ENCODE measurements at regions of chr5 and their contacts with region 1.

Region 1: GRCh38 chr5:56415356-56415765 is 182.2 kb upstream of the ANKRD55 start:
- DNase-seq: peak; percentile 89
- ATAC-seq: peak; percentile 71
- H3K4me3 ChIP-seq: peak overlapping the region in 3 of 5 experiments; percentile 21 to 56 (median 21)
- H3K4me3 Mint-ChIP-seq: peak overlapping the region; percentile 76
- H3K27ac ChIP-seq: peak overlapping the region; percentile 95 to 98
- H3K27ac Mint-ChIP-seq: peak overlapping the region; percentile 96
- H3K4me1 ChIP-seq: peaks cover 73 to 74% of the 10 kb centered on the region in 2 donors
- H3K4me1 Mint-ChIP-seq: peaks cover 80% of the 10 kb centered on the region
- H3K27me3 ChIP-seq: no peaks in the 10 kb centered on the region
- H3K27me3 Mint-ChIP-seq: no peaks in the 10 kb centered on the region
- CTCF ChIP-seq: no peak

Region 2: GRCh38 chr5:55391707-55392106 is 1023.7 kb before region 1 on chr5:
- CTCF ChIA-PET with region 1: no interaction called
- POLR2A ChIA-PET with region 1: no interaction called
- intact Hi-C with region 1: no loop called
- DNase-seq: no peak
- ATAC-seq: no peak
- H3K4me3 ChIP-seq: no peak overlapping the region
- H3K4me3 Mint-ChIP-seq: no peak overlapping the region
- H3K27ac ChIP-seq: no peak overlapping the region
- H3K27ac Mint-ChIP-seq: no peak overlapping the region
- H3K4me1 ChIP-seq: no peaks in the 10 kb centered on the region
- H3K4me1 Mint-ChIP-seq: no peaks in the 10 kb centered on the region
- H3K27me3 ChIP-seq: no peaks in the 10 kb centered on the region
- H3K27me3 Mint-ChIP-seq: no peaks in the 10 kb centered on the region
- CTCF ChIP-seq: no peak

Region 3: DNA sequence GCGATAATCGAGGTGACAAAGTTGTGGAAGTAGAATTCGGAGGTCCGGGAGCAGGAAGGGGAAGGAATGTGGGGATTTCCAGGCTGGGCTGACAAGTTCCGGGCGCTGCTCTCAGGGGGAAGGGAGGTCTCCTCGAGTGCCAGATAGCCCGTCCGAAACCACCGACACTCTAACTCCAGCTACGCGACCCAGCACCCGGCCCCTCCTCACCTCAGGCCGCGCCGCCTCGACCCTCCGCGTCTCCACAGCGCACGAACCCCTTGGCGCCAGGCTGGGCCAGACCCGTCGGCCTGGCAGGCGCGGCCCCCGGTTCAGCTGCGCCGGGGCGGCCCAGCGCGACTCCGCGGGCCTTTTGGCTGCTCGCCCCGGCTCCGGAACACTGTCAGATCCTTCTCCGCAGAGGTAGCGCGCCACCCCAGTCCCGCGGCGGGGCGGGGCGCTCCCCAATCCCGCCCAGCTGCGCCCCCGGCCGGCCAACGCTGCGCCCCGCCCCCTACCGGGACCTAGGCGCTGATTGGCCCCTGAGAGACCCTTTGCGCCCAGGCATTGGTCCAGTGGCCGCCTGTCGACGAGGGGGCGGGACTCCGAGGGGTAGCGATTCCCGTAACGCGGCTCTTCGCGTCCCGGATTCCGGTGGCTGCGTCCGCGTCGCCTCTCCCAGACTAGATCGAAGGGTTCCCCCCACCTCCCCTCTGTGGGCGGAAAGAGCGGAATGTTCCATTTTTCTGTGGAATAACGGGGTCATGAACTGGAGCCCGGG is 420.6 kb before region 1 on chr5 and contains the start of gene IL6ST:
- CTCF ChIA-PET with region 1: no interaction called
- POLR2A ChIA-PET with region 1: no interaction called
- intact Hi-C with region 1: loop called (anchors 1 kb)
- DNase-seq: peak; percentile 96
- ATAC-seq: peak; percentile 94
- H3K4me3 ChIP-seq: peak within 1 kb of the TSS; percentile 75 to 97 (median 91)
- H3K4me3 Mint-ChIP-seq: peak within 1 kb of the TSS; percentile 89
- H3K27ac ChIP-seq: peak within 1 kb of the TSS; percentile 75 to 94
- H3K27ac Mint-ChIP-seq: peak within 1 kb of the TSS; percentile 78
- H3K4me1 ChIP-seq: peaks cover 11 to 18% of the 10 kb centered on the region in 2 donors
- H3K4me1 Mint-ChIP-seq: peaks cover 33% of the 10 kb centered on the region
- H3K27me3 ChIP-seq: no peaks in the 10 kb centered on the region
- H3K27me3 Mint-ChIP-seq: peaks cover 4% of the 10 kb centered on the region
- CTCF ChIP-seq: no peak
- total RNA-seq, gene IL6ST: 28.0 and 31.1 TPM in 2 replicates

Region 4: DNA sequence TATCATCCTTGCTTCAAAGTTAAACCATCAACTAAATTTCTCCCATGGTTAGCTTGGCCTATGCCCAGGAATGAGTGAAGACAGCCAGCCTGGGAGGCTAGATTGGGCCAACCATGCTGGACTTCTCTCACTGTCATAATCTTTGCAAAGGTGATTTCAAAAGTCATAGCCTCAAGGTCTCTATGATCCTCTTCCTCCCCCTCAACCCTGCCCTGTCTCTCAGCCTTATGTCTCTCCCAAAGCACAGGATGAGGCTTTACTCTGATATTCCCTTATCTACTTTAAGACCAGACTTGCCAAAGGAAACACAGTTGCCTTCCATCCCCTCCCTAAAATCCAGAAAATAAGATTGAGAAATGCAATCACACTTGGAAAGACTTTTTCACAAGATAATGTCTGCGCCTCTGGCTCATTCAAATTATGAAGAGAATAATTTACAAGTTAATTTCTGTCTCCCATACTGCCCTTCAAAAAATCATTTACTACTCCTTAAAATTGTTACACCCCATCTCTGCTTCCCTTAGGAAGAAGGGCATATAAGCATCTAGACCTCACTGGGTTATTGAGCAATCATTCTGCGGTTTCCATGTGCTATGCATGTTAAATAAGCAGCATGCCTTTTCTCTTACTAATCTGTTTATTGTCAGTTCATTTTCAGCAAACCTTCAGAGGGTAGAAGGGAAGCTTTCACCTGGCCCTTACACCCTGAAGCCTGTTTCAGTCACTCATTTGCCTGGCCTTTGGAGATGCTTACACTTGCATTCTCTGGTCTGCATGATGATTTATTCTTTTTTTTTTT is 68.4 kb before region 1 on chr5:
- CTCF ChIA-PET with region 1: no interaction called
- POLR2A ChIA-PET with region 1: no interaction called
- intact Hi-C with region 1: loop called (anchors 2 kb)
- DNase-seq: no peak
- ATAC-seq: no peak
- H3K4me3 ChIP-seq: no peak overlapping the region
- H3K4me3 Mint-ChIP-seq: no peak overlapping the region
- H3K27ac ChIP-seq: no peak overlapping the region
- H3K27ac Mint-ChIP-seq: no peak overlapping the region
- H3K4me1 ChIP-seq: peaks cover 40 to 42% of the 10 kb centered on the region in 2 donors
- H3K4me1 Mint-ChIP-seq: peaks cover 51% of the 10 kb centered on the region
- H3K27me3 ChIP-seq: no peaks in the 10 kb centered on the region
- H3K27me3 Mint-ChIP-seq: no peaks in the 10 kb centered on the region
- CTCF ChIP-seq: no peak

Region 5: DNA sequence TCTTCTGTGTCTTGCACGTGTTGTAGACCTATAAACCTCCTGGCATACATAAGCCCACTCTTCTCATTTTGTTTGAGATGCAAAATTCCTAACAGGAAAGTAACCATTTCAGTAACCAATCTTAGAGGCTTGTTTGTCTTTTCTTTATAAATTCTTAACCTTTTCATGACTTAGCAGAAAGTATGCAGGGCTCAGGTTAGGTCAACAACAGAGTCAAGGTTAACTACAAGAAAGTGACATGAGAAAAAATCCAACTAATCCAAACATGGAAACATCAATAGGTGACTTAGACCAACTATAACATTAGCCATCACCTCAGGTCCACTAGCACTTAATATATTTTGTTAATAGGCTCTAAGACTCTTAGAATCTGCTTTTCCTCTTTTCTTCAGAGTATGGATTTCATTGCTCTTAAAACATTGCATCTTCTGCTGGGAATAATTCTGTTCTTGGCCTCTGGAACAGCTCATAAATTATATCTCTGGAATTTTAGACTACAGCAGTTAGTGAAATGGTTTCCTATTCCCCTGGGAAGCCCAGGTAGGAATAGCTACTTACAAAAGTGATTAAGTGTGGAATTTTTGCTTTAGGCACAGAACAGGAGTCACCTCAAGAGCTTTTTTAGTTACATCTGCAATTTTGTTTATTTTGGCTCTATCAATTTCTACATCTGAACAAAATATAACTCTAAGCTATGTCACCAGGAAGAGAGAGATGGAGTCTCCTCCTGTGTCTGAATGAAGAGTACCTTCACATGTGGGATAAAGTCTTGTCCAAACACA is 26.9 kb before region 1 on chr5:
- CTCF ChIA-PET with region 1: no interaction called
- POLR2A ChIA-PET with region 1: no interaction called
- intact Hi-C with region 1: no loop called
- DNase-seq: no peak
- ATAC-seq: no peak
- H3K4me3 ChIP-seq: no peak overlapping the region
- H3K4me3 Mint-ChIP-seq: no peak overlapping the region
- H3K27ac ChIP-seq: no peak overlapping the region
- H3K27ac Mint-ChIP-seq: no peak overlapping the region
- H3K4me1 ChIP-seq: peaks cover 0 to 26% of the 10 kb centered on the region in 2 donors
- H3K4me1 Mint-ChIP-seq: peaks cover 15% of the 10 kb centered on the region
- H3K27me3 ChIP-seq: no peaks in the 10 kb centered on the region
- H3K27me3 Mint-ChIP-seq: no peaks in the 10 kb centered on the region
- CTCF ChIP-seq: no peak

Region 6: DNA sequence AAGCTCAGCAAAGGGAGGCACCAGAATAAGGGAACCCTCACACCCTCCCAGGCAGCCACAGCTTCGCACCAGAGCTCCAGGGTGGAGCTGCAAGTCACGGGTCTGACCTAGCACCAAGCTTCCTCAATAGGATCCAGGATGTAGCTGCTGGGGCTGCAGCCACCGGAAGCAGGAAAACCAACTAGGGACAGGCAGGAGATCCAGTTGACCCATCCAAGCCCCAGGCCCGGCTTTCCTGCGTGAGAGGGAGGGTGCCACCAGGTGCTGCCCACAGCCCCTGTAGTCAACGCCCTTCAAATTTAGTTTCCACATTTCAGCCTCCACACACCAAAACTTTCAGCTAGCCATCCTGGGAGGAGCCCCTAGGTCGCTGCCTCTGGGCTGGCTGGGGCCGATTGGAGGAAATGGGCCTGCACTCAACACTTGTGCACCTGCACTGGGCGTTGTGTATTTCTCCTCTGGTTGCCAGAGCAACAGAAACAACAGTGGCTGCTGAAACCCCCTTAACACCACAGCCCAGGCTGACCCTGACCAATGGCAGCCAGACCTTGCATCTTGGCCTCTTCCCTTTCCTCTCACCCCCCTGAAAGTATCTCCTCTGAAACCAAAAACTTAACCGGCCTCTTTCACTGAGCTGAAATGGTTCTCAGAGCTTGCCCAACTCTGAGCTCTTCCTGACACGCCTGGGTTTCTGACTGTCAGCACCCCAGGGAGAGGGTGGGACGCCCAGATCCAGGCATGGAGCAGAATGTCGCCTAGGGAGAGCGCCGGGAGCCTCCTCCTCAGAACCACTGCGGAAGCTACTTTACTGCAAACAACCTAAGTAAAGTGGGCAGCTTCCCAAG is 173.5 kb after region 1 on chr5:
- CTCF ChIA-PET with region 1: no interaction called
- POLR2A ChIA-PET with region 1: interaction called, 3 read pairs
- intact Hi-C with region 1: loop called (anchors 1 kb)
- DNase-seq: peak; percentile 98
- ATAC-seq: peak; percentile 85
- H3K4me3 ChIP-seq: peak overlapping the region in 3 of 5 experiments; percentile 22 to 41 (median 25)
- H3K4me3 Mint-ChIP-seq: peak overlapping the region; percentile 59
- H3K27ac ChIP-seq: peak overlapping the region; percentile 99 to 100
- H3K27ac Mint-ChIP-seq: peak overlapping the region; percentile 96
- H3K4me1 ChIP-seq: peaks cover 63 to 67% of the 10 kb centered on the region in 2 donors
- H3K4me1 Mint-ChIP-seq: peaks cover 77% of the 10 kb centered on the region
- H3K27me3 ChIP-seq: no peaks in the 10 kb centered on the region
- H3K27me3 Mint-ChIP-seq: no peaks in the 10 kb centered on the region
- CTCF ChIP-seq: no peak

Region 7: DNA sequence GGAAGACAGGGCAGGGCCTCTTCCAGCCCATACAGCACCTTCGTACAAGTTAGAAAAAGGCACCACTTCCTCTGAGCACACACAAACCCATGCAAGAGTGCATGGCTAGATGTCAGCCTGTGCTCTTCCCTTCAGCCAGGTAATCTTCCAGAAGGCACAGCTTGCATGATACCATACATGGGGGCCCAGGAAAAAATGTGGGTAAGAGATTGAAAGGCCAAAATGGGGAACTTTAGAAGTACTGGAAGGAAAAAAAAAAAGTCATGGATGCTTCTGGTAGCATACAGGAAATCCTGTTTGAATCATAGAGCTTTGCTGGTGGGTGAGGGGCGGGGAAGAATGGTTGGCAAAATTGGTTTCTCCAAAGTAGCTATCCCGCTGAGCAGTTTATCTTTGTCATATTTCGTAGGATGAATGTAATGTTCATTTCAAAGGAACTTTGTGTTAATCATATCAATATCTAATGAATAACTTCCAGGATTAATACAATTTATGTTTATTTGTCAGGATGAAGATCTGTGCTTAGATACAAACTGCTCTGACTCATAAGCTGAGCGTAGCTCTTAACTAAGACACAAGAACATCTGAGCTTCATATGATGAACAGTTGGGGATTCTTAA is 321.8 kb after region 1 on chr5:
- CTCF ChIA-PET with region 1: interaction called, 4 read pairs
- POLR2A ChIA-PET with region 1: no interaction called
- intact Hi-C with region 1: loop called (anchors 5 kb)
- DNase-seq: peak; percentile 34
- ATAC-seq: peak; percentile 18
- H3K4me3 ChIP-seq: peak overlapping the region in 1 of 5 experiments; percentile 48
- H3K4me3 Mint-ChIP-seq: peak overlapping the region; percentile 73
- H3K27ac ChIP-seq: peak overlapping the region; percentile 79 to 91
- H3K27ac Mint-ChIP-seq: peak overlapping the region; percentile 87
- H3K4me1 ChIP-seq: peaks cover 63% of the 10 kb centered on the region in 2 donors
- H3K4me1 Mint-ChIP-seq: peaks cover 63% of the 10 kb centered on the region
- H3K27me3 ChIP-seq: no peaks in the 10 kb centered on the region
- H3K27me3 Mint-ChIP-seq: no peaks in the 10 kb centered on the region
- CTCF ChIP-seq: no peak

Region 8: DNA sequence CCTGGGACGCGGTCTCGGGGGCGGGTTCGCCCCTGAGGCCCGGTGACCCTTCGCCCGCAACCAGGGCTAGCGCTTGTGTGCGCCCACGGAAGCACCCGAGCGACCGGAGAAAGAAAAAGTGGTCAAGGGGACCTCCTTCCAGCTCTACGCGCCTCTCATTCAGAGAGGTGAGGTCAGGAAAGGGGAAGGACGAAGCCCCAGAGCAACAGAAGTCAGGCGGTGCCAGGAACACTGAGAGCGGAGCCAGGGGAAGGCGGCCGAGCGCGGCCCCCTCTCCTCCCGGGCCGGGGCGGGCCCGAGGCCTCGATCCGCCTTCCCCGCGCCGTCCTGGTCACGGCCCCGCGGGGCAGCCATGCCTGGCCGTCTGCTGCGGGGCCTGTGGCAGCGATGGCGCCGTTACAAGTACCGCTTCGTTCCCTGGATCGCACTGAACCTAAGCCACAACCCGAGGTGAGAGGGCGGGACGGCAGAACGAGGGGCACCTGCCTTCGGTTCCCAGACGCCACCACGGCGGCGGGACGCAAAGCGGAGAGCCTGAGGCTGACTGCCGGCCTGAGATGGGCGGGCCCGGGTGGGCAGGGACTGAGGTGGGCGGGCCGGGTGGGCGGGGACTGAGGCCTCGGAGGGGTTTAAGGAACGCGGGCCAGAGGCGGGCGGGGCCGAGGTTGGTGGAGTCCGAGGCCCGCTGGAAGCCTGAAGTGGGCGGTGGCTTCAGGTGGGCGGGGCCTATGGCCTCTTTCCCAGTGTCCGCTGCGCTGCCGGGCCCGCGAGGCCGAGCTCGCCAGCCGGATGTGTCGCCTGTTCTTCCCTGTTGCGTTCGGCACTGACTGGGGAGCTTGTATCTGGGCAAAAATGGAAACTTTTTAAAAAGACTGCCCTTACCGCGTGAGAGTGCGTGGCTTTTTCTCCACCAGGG is 494.2 kb after region 1 on chr5 and contains the start of gene SETD9:
- CTCF ChIA-PET with region 1: no interaction called
- POLR2A ChIA-PET with region 1: no interaction called
- intact Hi-C with region 1: no loop called
- DNase-seq: peak; percentile 94
- ATAC-seq: peak; percentile 83
- H3K4me3 ChIP-seq: peak within 1 kb of the TSS; percentile 88 to 99 (median 97)
- H3K4me3 Mint-ChIP-seq: peak within 1 kb of the TSS; percentile 93
- H3K27ac ChIP-seq: peak within 1 kb of the TSS; percentile 78 to 93
- H3K27ac Mint-ChIP-seq: peak within 1 kb of the TSS; percentile 91
- H3K4me1 ChIP-seq: peaks cover 12 to 22% of the 10 kb centered on the region in 2 donors
- H3K4me1 Mint-ChIP-seq: peaks cover 21% of the 10 kb centered on the region
- H3K27me3 ChIP-seq: no peaks in the 10 kb centered on the region
- H3K27me3 Mint-ChIP-seq: no peaks in the 10 kb centered on the region
- CTCF ChIP-seq: no peak
- total RNA-seq, gene SETD9: 7.2 and 9.5 TPM in 2 replicates

Region 9: DNA sequence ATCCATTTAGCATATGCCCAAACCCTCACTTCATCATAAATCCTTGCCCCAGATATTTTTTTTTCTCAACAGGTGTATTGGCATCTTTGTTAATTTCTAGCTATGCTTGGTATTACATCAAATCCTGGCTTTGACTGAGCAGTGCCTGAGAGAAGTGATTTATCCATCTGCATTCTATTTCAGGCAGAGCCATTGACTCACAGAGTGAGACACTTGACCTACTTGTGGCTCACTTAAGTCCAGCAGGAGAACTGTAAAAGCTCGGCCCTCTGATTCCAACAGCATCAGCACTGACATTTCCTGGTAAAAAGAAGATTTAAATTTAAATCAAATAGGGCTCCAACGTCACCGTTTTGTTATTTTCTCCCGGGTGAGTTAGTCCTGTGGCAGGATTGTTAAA is 1951.1 kb after region 1 on chr5:
- CTCF ChIA-PET with region 1: no interaction called
- POLR2A ChIA-PET with region 1: no interaction called
- intact Hi-C with region 1: no loop called
- DNase-seq: no peak
- ATAC-seq: no peak
- H3K4me3 ChIP-seq: no peak overlapping the region
- H3K4me3 Mint-ChIP-seq: no peak overlapping the region
- H3K27ac ChIP-seq: no peak overlapping the region
- H3K27ac Mint-ChIP-seq: no peak overlapping the region
- H3K4me1 ChIP-seq: no peaks in the 10 kb centered on the region
- H3K4me1 Mint-ChIP-seq: no peaks in the 10 kb centered on the region
- H3K27me3 ChIP-seq: no peaks in the 10 kb centered on the region
- H3K27me3 Mint-ChIP-seq: peaks cover 11% of the 10 kb centered on the region
- CTCF ChIP-seq: no peak